ENCODE measurements at regions of chr16 and their contacts with region 1.

Region 1: GRCh38 chr16:15041271-15042004 is 14.4 kb downstream of the NTAN1 start:
- H3K4me3 Mint-ChIP-seq: peak overlapping the region; percentile 46
- H3K27ac Mint-ChIP-seq: peak overlapping the region; percentile 84
- H3K4me1 Mint-ChIP-seq: peaks cover 15% of the 10 kb centered on the region
- H3K27me3 Mint-ChIP-seq: no peaks in the 10 kb centered on the region

Region 2: GRCh38 chr16:14148569-14148968 is 892.9 kb before region 1 on chr16:
- intact Hi-C with region 1: no loop called
- H3K4me3 Mint-ChIP-seq: no peak overlapping the region
- H3K27ac Mint-ChIP-seq: no peak overlapping the region
- H3K4me1 Mint-ChIP-seq: no peaks in the 10 kb centered on the region
- H3K27me3 Mint-ChIP-seq: no peaks in the 10 kb centered on the region

Region 3: DNA sequence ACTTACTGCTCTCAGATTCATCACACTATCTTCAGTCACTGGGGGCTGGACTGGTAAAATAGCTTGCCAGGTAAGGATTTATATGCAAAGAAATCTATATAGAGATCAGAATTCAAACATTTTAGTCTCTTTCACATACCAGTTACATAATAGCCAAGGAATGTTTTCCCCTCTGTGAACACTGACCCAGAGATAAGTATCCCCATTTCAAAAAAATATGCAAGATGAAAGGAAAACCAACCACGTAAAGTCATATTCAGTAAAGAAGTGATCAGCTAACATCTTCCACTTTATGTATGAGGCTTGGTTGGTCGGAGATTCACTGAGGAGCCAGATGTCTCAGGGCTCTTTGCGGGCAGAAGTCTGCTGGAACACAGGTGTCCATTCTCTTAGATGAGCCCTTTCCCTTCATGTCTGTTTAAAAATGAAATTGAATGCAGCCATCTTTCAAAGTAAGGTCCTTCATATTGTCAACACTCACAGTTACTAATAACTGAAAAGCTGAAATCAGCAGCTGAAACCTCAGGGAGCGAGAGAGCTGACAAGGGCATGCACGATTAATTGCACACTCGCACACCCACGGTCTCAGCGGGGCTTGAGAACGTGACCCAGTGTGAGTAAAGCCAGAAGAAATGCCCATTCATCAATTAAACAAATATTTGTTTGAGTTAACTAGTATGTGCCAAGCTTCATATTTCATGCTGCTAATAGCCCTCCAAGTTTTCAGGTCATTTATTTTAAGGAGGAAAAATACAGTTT is 809.2 kb before region 1 on chr16:
- intact Hi-C with region 1: no loop called
- H3K4me3 Mint-ChIP-seq: no peak overlapping the region
- H3K27ac Mint-ChIP-seq: no peak overlapping the region
- H3K4me1 Mint-ChIP-seq: no peaks in the 10 kb centered on the region
- H3K27me3 Mint-ChIP-seq: no peaks in the 10 kb centered on the region

Region 4: GRCh38 chr16:15055141-15056053 is 14.0 kb after region 1 on chr16:
- intact Hi-C with region 1: loop called (anchors 1 kb)
- H3K4me3 Mint-ChIP-seq: peak overlapping the region; percentile 89
- H3K27ac Mint-ChIP-seq: peak overlapping the region; percentile 68
- H3K4me1 Mint-ChIP-seq: peaks cover 31% of the 10 kb centered on the region
- H3K27me3 Mint-ChIP-seq: no peaks in the 10 kb centered on the region

Region 5: DNA sequence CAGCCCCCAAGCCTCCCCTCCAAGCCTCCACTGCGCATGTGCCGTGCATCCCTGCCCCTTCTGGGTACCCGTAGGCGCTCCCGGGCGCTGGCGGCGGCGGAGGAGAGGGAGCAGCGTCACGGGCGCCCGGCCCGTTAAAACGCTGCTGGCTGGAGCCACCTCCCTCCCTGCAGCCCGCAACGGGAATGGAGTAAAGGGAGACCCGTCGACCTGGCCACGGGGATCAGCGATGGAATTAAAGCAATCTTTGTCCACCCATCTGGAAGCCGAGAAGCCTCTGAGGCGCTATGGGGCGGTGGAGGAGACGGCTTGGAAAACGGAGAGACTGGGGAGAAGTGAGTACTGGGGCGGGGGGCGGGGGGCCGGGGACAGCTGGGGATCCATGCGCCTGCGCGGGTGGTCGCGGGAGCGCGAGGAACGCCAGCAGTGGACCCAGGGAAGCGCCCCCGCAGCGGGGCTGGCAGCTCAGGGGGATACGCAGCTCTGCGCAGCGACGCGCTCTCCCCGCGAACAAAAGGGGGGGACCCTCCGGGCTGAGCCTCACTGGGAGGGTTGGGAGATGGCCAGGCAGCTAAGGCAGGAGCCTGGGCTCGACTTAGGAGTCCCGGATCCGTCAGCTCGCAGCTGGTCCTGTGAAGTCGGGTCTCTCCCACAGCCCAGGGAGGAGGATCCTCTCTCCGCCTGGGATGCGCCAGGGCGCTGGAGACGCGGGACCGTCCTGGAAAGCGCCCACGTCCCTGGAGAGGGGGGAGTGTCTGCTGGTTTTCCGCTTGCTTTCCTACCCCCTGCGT is 393.2 kb after region 1 on chr16 and contains the start of gene BMERB1:
- intact Hi-C with region 1: no loop called
- H3K4me3 Mint-ChIP-seq: peak within 1 kb of the TSS; percentile 69
- H3K27ac Mint-ChIP-seq: no peak within 1 kb of the TSS
- H3K4me1 Mint-ChIP-seq: peaks cover 5% of the 10 kb centered on the region
- H3K27me3 Mint-ChIP-seq: peaks cover 51% of the 10 kb centered on the region

Measured in dendritic cell treated with granulocyte-macrophage colony-stimulating factor and Interleukin-4, amounts not matched to agents 40 ng/mL and 50 ng/mL, for 4 days (primary cell).